ENCODE measurements at regions of chr6 and their contacts with region 1.

Region 1: DNA sequence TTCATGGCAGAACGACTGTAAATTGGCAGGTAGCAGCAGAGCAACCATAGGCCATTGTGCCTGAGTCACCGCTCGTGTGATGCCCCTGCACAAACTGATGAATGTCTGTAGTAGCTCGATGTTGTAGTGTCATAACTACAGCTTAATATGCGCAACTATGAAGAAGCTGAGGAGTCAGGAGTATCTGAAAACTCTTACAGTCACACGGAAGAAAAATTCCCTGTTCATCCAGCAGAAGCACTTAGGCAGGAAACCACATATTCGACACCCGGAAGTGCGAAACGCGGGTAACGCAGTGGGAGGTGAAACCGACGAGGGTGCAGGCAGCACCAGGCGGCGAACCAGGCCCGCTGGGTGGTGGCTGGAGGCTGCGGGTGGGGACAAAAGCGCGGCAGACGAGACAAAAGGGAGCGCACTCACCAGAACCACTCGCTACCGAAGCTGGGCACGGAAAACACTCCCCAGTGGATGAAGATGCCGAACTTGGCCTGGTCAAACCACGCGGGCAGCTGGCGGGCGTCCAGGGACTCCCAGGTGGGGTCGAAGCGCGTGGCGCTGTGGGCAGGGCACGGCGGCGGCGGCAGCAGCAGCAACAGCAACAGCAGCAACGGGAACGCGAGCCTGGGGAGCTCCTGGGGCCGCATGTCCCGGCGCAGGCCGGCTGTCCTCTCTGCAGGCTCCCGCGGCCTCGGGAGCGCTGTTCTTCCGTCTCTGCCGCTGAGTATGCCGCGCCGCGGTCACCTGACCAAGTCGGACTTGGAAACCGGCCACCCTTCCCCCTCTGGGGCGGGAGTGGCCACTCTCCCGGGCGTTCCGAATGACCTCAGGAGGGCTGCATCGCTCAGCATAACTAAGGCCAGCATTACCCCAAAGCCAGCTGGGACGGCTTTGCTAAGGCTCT is at the start of gene FUCA2:
- DNase-seq: peak; percentile 81
- ATAC-seq: peak; percentile 82
- H3K4me3 Mint-ChIP-seq: peak within 1 kb of the TSS; percentile 90
- H3K27ac Mint-ChIP-seq: peak within 1 kb of the TSS; percentile 93
- H3K4me1 Mint-ChIP-seq: peaks cover 38% of the 10 kb centered on the region
- H3K27me3 Mint-ChIP-seq: no peaks in the 10 kb centered on the region
- total RNA-seq, gene FUCA2: 20.2 to 23.7 TPM

Region 2: GRCh38 chr6:143419526-143419925 is 91.7 kb before region 1 on chr6:
- CTCF ChIA-PET with region 1: no interaction called
- DNase-seq: no peak
- ATAC-seq: no peak
- H3K4me3 Mint-ChIP-seq: no peak overlapping the region
- H3K27ac Mint-ChIP-seq: no peak overlapping the region
- H3K4me1 Mint-ChIP-seq: no peaks in the 10 kb centered on the region
- H3K27me3 Mint-ChIP-seq: no peaks in the 10 kb centered on the region

Region 3: DNA sequence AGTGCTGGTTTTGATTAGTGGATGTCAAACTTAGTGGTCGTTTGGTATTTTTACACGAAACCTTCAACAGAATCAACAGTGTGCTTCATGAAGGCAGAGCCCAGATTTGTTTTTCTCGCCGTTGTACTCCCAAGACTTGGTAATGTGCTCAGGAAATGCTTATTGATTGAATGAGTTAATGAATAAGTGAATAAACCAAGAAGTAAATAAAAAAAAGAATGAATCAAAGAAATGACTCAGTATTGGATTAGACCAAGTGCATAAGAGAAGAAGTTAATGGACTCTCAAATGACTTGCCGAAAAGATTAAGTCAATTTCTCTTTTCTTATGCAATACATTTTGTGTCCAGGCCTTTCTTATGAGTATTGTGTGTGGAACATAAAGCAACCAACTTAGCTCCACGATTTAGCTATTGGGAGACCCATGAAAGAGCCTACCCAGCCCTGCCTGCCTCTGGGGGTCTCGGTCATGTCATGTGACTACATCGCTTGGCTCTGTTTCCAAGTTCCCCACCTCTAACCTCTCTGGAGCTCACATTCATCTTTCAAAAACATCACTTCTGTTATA is 10.9 kb after region 1 on chr6:
- CTCF ChIA-PET with region 1: interaction called, 12 read pairs
- DNase-seq: no peak
- ATAC-seq: no peak
- H3K4me3 Mint-ChIP-seq: no peak overlapping the region
- H3K27ac Mint-ChIP-seq: no peak overlapping the region
- H3K4me1 Mint-ChIP-seq: peaks cover 7% of the 10 kb centered on the region
- H3K27me3 Mint-ChIP-seq: no peaks in the 10 kb centered on the region

Region 4: GRCh38 chr6:143529095-143529494 is 17.9 kb after region 1 on chr6:
- CTCF ChIA-PET with region 1: interaction called, 18 read pairs
- DNase-seq: no peak
- ATAC-seq: peak; percentile 27
- H3K4me3 Mint-ChIP-seq: no peak overlapping the region
- H3K27ac Mint-ChIP-seq: no peak overlapping the region
- H3K4me1 Mint-ChIP-seq: peaks cover 7% of the 10 kb centered on the region
- H3K27me3 Mint-ChIP-seq: no peaks in the 10 kb centered on the region

Region 5: DNA sequence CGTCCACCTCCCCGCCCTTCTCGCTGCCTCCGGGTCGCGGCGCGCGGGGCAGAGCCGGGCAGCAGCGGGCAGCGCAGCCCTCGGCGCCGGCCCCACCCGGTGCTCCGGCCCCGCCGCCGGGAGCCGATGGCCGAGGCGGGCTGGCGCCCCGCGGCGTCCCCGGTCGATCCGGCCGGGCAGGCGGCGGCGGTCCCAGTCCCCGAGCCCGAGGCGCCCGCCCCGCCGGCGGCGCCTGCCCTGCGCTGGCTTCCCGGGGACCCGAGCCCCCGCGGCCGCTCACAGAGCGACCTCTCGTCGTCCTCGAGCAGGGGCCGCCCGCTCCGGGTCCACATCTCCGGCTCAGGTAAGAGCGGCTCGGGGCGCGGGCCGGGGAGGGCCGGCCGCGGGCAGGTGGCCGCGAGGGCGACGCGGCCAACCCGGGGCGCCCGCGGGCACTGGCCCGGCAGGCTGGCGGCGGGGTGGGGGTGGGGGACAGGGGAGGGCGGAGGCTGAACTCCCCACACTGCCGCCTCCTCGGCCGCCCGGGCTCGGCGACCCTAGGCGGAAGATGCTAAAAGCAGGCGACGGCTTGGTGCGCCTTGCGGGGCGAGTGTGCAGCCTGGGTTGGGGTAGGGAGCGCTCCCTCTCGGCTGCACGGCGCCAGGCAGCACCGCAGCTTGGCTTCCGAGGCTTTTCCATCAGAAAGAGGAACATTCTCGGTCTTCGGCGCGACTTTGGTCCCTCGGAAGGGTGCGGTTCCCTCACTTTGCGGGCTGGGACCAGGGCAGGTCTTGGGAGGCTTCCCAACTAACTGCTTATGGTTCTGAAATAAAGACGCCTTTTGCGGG is 25.8 kb after region 1 on chr6:
- CTCF ChIA-PET with region 1: interaction called, 18 read pairs
- DNase-seq: peak; percentile 73
- ATAC-seq: peak; percentile 75
- H3K4me3 Mint-ChIP-seq: peak overlapping the region; percentile 82
- H3K27ac Mint-ChIP-seq: peak overlapping the region; percentile 79
- H3K4me1 Mint-ChIP-seq: peaks cover 35% of the 10 kb centered on the region
- H3K27me3 Mint-ChIP-seq: no peaks in the 10 kb centered on the region

Region 6: DNA sequence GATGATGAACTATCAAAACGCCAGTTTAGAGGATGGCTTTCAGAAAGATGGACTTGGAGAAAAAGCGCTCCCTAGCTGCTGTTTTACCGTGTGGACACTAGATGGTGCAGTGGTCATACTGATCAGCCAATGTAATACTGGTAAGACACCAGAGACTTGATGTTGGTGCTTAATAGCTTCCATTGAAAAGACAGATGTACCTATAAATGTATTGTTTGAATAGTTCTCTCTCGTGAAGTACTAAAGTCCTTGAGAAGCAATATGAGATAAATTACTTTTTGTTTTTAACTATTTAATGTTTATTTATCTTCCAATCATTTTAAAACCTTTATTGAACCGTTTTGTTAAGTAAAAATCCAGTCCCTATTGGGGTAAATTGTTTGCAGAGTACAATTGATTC is 64.2 kb after region 1 on chr6:
- CTCF ChIA-PET with region 1: interaction called, 11 read pairs
- DNase-seq: peak; percentile 59
- ATAC-seq: peak; percentile 77
- H3K4me3 Mint-ChIP-seq: no peak overlapping the region
- H3K27ac Mint-ChIP-seq: no peak overlapping the region
- H3K4me1 Mint-ChIP-seq: peaks cover 4% of the 10 kb centered on the region
- H3K27me3 Mint-ChIP-seq: peaks cover 6% of the 10 kb centered on the region

Measured in activated CD8-positive, alpha-beta memory T cell treated with anti-CD3 and anti-CD28 coated beads, Interleukin-2, amount 10 ng/mL, durations not matched to agents 7 days and 5 days (primary cell).